ENCODE measurements at regions of chr2 and their contacts with region 1.

Region 1: DNA sequence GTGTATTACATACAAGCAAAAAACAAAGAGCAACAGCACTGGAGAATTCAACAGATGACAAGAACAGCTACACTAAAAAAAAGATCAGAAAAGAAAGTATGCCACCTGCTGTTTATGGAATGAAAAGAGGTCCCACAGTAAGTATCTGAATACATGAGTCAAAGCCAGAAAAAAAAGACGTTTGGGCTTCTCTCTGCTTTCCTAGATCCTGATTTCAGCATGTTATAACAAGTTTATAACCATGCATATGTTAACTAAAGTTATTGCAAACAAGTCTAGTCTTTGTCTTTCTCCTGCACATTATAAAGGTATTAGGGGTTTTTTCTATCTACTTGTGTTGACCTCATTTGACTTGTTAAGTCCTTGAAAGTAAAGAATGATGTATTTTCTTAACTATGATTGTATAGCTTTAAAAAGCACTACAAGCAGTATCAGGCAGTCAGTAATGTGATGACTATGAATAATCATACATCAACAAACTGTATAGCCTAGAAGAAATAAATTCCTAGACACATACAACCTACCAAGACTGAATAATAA is 108.5 kb upstream of the COL5A2 start:
- DNase-seq: peak; percentile 82
- H3K4me3 ChIP-seq: no peak overlapping the region
- H3K27ac ChIP-seq: no peak overlapping the region
- H3K4me1 ChIP-seq: peaks cover 6% of the 10 kb centered on the region
- H3K27me3 ChIP-seq: no peaks in the 10 kb centered on the region
- CTCF ChIP-seq: peak; percentile 41
- POLR2A ChIP-seq: no peak

Region 2: GRCh38 chr2:189096769-189097447 is 191.1 kb before region 1 on chr2:
- CTCF ChIA-PET with region 1: interaction called, 38 read pairs
- POLR2A ChIA-PET with region 1: no interaction called
- dilution Hi-C with region 1: no loop called
- intact Hi-C with region 1: loop called (anchors 1 kb)
- DNase-seq: peak; percentile 61
- H3K4me3 ChIP-seq: no peak overlapping the region
- H3K27ac ChIP-seq: peak overlapping the region; percentile 50
- H3K4me1 ChIP-seq: peaks cover 15% of the 10 kb centered on the region
- H3K27me3 ChIP-seq: no peaks in the 10 kb centered on the region
- CTCF ChIP-seq: no peak
- POLR2A ChIP-seq: no peak

Region 3: GRCh38 chr2:189137519-189137918 is 150.5 kb before region 1 on chr2:
- CTCF ChIA-PET with region 1: interaction called, 79 read pairs
- POLR2A ChIA-PET with region 1: no interaction called
- dilution Hi-C with region 1: no loop called
- intact Hi-C with region 1: no loop called
- DNase-seq: no peak
- H3K4me3 ChIP-seq: no peak overlapping the region
- H3K27ac ChIP-seq: no peak overlapping the region
- H3K4me1 ChIP-seq: no peaks in the 10 kb centered on the region
- H3K27me3 ChIP-seq: no peaks in the 10 kb centered on the region
- CTCF ChIP-seq: no peak
- POLR2A ChIP-seq: no peak

Region 4: GRCh38 chr2:189164746-189165145 is 123.3 kb before region 1 on chr2:
- CTCF ChIA-PET with region 1: interaction called, 13 read pairs
- POLR2A ChIA-PET with region 1: no interaction called
- dilution Hi-C with region 1: no loop called
- intact Hi-C with region 1: no loop called
- DNase-seq: no peak
- H3K4me3 ChIP-seq: no peak overlapping the region
- H3K27ac ChIP-seq: no peak overlapping the region
- H3K4me1 ChIP-seq: peaks cover 14% of the 10 kb centered on the region
- H3K27me3 ChIP-seq: no peaks in the 10 kb centered on the region
- CTCF ChIP-seq: no peak
- POLR2A ChIP-seq: no peak

Region 5: DNA sequence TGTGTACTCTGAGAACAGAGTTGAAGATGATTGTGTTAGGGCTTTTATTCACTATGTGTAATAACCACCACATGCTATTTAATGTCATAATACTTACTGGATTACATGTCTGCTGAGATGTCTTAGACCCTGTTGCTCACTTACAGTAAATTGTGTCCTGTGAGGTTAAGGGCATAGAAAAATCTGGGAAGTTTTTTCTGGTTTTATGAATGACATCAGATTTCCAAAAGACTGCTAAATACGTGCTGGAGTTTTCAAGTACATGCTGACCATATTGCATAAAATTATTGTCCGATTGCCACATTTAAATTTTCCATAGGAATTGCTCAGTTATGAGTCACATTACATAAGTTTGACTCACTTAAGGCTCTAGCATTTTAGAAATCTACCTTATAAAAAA is 11.8 kb before region 1 on chr2:
- CTCF ChIA-PET with region 1: interaction called, 10 read pairs
- POLR2A ChIA-PET with region 1: no interaction called
- dilution Hi-C with region 1: no loop called
- intact Hi-C with region 1: no loop called
- DNase-seq: peak; percentile 66
- H3K4me3 ChIP-seq: no peak overlapping the region
- H3K27ac ChIP-seq: no peak overlapping the region
- H3K4me1 ChIP-seq: peaks cover 8% of the 10 kb centered on the region
- H3K27me3 ChIP-seq: no peaks in the 10 kb centered on the region
- CTCF ChIP-seq: no peak
- POLR2A ChIP-seq: no peak

Region 6: GRCh38 chr2:189337656-189338055 is 49.6 kb after region 1 on chr2:
- CTCF ChIA-PET with region 1: no interaction called
- POLR2A ChIA-PET with region 1: no interaction called
- dilution Hi-C with region 1: no loop called
- intact Hi-C with region 1: no loop called
- DNase-seq: no peak
- H3K4me3 ChIP-seq: no peak overlapping the region
- H3K27ac ChIP-seq: no peak overlapping the region
- H3K4me1 ChIP-seq: no peaks in the 10 kb centered on the region
- H3K27me3 ChIP-seq: no peaks in the 10 kb centered on the region
- CTCF ChIP-seq: no peak
- POLR2A ChIP-seq: no peak

Region 7: GRCh38 chr2:189393440-189394111 is 105.5 kb after region 1 on chr2:
- CTCF ChIA-PET with region 1: no interaction called
- POLR2A ChIA-PET with region 1: no interaction called
- dilution Hi-C with region 1: no loop called
- intact Hi-C with region 1: no loop called
- DNase-seq: peak; percentile 51
- H3K4me3 ChIP-seq: no peak overlapping the region
- H3K27ac ChIP-seq: no peak overlapping the region
- H3K4me1 ChIP-seq: no peaks in the 10 kb centered on the region
- H3K27me3 ChIP-seq: no peaks in the 10 kb centered on the region
- CTCF ChIP-seq: no peak
- POLR2A ChIP-seq: no peak

Region 8: DNA sequence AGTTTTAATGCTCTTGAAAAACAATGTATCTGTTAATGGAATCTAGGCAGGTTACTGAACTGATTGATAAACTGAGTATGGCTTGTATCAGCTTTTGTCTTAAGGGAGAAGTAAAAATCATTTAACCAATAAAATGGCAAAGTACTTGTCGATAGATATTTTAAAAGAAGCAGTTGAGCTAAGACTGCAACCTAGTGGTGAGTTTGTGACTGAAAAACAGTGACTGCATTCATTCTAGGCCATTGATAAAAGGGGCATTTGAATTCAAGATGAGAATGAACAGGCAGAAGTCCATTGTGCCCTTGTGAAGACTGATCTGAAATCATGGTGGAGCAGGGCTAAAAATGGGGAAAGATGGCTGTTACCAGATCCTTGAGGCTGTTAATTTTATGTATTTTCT is 833.9 kb after region 1 on chr2:
- CTCF ChIA-PET with region 1: no interaction called
- POLR2A ChIA-PET with region 1: no interaction called
- dilution Hi-C with region 1: no loop called
- intact Hi-C with region 1: no loop called
- DNase-seq: peak; percentile 52
- H3K4me3 ChIP-seq: no peak overlapping the region
- H3K27ac ChIP-seq: no peak overlapping the region
- H3K4me1 ChIP-seq: no peaks in the 10 kb centered on the region
- H3K27me3 ChIP-seq: no peaks in the 10 kb centered on the region
- CTCF ChIP-seq: peak; percentile 8 to 39
- POLR2A ChIP-seq: no peak